ENCODE measurements at regions of chr6 and their contacts with region 1.

Region 1: DNA sequence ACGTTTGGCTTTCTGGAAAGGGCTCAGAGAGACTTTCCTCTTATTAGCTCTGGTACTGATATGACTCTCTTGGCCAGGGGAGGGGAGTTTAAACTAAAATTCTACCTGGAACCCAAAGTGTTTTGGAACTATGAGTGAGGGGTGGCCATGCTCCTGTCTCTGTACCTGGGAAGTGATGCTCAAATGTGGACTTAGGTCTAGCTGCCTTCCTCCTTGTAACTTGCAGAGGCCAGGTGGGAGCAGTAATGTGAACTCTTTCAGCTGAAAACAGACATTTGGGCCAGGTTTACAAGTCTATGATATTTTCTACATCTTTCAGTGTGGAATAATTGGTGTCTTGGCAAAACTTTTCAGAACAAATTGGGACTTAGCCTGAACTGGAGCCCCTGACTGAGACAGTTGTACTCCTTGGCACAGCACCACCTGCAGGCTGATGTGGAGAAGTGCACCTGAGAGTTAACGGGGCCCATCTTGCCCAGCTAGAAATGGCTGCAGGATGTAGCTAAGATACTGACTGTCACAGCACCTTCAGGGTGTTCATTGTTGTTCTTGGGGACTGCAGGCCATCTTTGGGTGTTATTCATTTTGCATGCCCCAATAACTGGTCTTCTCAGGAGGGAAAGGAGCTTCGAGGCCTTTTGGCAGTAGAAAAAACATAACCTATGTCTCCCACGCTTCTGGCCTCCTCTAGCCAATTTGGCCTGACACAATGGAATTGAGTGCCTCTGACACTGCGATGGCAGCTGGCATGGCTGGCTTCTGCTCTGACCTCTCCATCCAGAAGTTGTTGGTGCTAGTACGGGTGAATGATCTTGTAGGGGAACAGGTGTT is 37.1 kb downstream of the CD109 start:
- DNase-seq: no peak
- H3K4me3 ChIP-seq: no peak overlapping the region
- CTCF ChIP-seq: peak; percentile 93

Region 2: DNA sequence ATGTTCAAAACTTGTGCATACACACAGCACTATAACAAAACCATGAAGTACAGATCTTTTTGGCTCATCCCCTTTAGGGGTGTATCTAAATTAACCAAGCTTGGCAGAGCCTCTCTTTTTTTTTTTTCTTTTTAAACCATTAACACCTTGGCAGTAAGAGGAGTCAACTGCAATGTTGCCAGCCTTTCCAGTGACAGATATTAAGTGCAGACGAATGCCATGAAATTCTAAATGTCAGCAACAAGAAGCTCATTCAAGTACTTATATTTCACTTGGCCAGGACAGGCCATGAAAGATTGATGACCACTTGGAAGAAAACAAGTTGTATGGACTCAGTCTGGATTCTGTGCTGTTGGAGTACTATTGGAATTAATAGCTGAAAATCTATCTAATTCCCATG is 129.0 kb before region 1 on chr6:
- CTCF ChIA-PET with region 1: no interaction called
- POLR2A ChIA-PET with region 1: no interaction called
- DNase-seq: no peak
- H3K4me3 ChIP-seq: no peak overlapping the region
- CTCF ChIP-seq: no peak

Region 3: GRCh38 chr6:73653571-73654424 is 79.3 kb before region 1 on chr6 and contains the start of gene SLC17A5:
- CTCF ChIA-PET with region 1: interaction called, 22 read pairs
- POLR2A ChIA-PET with region 1: no interaction called
- DNase-seq: peak; percentile 49
- H3K4me3 ChIP-seq: peak within 1 kb of the TSS; percentile 96
- CTCF ChIP-seq: no peak

Region 4: DNA sequence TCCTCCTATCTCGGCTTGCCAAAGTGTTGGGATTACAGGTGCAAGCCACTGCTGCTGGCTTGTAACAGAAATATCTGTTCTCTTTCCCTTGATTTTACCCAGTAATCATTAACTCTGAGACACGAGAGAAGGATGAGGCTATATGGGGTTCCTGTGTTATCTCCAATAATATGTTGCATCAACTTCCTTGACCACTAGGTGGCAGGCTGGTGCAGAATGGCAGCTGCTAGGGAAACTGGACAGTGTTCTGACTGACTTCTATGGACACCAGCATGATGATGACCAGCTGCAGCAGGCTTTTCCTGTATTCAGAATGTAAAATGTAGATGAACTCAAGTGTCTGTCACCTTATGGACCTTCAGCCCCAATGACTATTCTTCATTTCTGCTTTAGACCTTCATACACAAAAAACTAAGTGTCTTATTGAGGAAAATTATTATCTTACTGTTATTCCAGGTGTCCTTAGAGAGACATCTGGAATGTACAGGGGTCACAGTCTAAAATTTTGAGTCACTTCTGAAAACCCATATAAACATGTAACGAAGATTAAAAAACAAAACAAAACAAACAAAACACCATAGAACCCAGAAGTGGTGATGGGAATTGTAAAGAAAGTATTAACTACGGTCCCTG is 57.5 kb before region 1 on chr6:
- CTCF ChIA-PET with region 1: interaction called, 276 read pairs
- POLR2A ChIA-PET with region 1: no interaction called
- DNase-seq: no peak
- H3K4me3 ChIP-seq: no peak overlapping the region
- CTCF ChIP-seq: peak; percentile 87

Region 5: DNA sequence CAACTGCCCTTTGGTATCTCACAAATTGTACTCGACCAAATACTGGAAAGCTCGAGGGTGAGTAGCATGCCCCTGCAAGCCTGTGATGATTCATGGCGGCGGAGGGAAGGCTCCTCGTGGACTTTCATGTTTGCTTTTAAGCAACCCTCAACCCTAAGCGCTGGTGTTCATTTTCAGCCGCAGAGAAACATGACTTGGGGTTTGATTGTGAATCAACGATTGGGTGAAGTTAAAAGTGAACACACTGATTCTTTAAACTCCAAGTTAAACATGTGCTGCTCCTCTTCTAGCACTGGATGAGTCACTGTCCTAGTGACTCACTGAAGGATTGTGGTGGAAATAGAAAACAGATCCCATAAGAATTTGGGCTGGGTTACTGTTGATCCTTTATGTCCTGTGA is 28.8 kb before region 1 on chr6:
- CTCF ChIA-PET with region 1: interaction called, 15 read pairs
- POLR2A ChIA-PET with region 1: no interaction called
- DNase-seq: peak; percentile 94
- H3K4me3 ChIP-seq: peak overlapping the region; percentile 25
- CTCF ChIP-seq: no peak

Region 6: DNA sequence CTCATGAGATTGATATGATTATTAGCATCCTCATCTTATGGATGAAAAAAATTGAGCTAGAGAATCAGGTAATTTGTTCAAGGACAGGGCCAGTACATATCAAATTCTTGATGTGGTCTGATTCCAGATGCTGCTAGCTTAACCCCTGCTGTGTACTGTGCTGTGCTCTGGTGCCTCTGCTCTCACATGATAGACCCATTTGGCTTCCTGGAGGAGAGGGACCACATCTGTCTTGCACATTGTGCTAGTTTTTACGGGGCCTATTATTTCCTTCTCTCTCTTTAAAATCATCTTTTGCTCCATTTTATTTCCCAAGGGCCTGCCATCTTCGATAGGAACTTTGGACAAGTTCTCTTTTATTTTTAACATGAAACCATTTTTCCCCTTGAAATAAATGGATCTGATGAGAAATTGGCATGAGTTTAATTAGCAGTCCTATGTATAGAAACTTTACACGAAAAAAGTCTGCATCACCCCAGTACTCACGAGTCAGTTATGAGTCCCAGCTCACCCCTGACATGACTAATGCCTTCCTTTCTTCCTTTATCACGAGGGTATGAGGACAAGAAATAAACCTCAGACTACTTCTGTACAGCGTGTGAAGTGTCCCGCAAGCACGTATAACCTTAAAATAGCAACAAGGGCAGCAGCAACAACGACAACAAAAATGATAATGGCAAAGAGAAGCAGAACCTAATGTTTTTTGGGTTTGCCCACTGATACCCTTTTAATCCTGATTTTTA is 10.6 kb before region 1 on chr6:
- CTCF ChIA-PET with region 1: interaction called, 26 read pairs
- POLR2A ChIA-PET with region 1: no interaction called
- DNase-seq: peak; percentile 88
- H3K4me3 ChIP-seq: no peak overlapping the region
- CTCF ChIP-seq: no peak

Region 7: GRCh38 chr6:73768558-73768957 is 35.5 kb after region 1 on chr6:
- CTCF ChIA-PET with region 1: interaction called, 15 read pairs
- POLR2A ChIA-PET with region 1: no interaction called
- DNase-seq: no peak
- H3K4me3 ChIP-seq: no peak overlapping the region
- CTCF ChIP-seq: no peak

Region 8: DNA sequence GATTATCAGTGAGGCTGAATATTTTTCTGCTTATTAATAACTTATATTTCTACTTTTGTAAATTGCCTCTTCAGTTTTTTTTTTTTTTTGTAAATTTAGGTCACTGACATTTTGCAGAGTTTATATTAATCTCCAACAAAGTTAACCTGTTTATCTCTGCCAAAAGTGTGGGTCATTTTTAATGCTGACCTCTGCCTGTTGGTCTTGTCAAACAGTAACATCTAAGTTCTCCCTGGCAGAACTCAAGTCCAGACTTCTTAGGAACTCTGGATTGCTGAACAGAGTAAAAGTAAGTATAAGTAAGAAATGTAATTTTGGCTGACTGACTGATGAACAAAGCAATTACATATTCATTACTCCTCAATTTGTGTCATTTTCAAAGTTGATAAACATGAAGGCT is 46.9 kb after region 1 on chr6:
- CTCF ChIA-PET with region 1: no interaction called
- POLR2A ChIA-PET with region 1: no interaction called
- DNase-seq: no peak
- H3K4me3 ChIP-seq: no peak overlapping the region
- CTCF ChIP-seq: no peak